ENCODE measurements at regions of chr19 and their contacts with region 1.

Region 1: GRCh38 chr19:13298565-13299481 is 148.6 kb downstream of the IER2 start:
- DNase-seq: no peak
- H3K4me3 ChIP-seq: no peak overlapping the region
- H3K27ac ChIP-seq: no peak overlapping the region
- H3K4me1 ChIP-seq: no peaks in the 10 kb centered on the region
- H3K27me3 ChIP-seq: peaks cover 6% of the 10 kb centered on the region
- CTCF ChIP-seq: no peak

Region 2: DNA sequence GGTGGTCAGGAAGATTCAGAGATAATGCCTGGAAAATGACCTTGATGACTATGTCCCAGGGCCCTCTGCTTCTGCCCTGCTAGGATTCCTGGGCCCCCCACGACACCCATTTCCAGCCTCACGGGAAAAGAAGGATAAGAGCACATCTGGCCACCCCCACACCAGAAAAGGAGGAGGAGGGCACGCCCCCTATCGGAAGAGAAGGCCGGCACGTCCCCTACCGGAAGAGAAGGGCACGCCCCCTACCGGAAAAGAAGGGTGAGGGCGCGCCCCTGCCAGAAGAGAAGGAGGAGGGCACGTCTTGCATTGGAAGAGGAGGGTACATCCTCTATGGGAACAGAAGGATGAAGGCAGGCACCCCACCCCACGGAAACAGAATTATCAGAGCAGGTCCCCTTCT is 64.3 kb before region 1 on chr19:
- CTCF ChIA-PET with region 1: no interaction called
- dilution Hi-C with region 1: loop called (anchors 5 kb)
- in situ Hi-C with region 1: no loop called
- intact Hi-C with region 1: no loop called
- DNase-seq: no peak
- H3K4me3 ChIP-seq: no peak overlapping the region
- H3K27ac ChIP-seq: no peak overlapping the region
- H3K4me1 ChIP-seq: no peaks in the 10 kb centered on the region
- H3K27me3 ChIP-seq: no peaks in the 10 kb centered on the region
- CTCF ChIP-seq: peak; percentile 64 to 73

Region 3: GRCh38 chr19:13315495-13315894 is 16.7 kb after region 1 on chr19:
- CTCF ChIA-PET with region 1: no interaction called
- dilution Hi-C with region 1: no loop called
- in situ Hi-C with region 1: no loop called
- intact Hi-C with region 1: no loop called
- DNase-seq: no peak
- H3K4me3 ChIP-seq: no peak overlapping the region
- H3K27ac ChIP-seq: no peak overlapping the region
- H3K4me1 ChIP-seq: no peaks in the 10 kb centered on the region
- H3K27me3 ChIP-seq: no peaks in the 10 kb centered on the region
- CTCF ChIP-seq: no peak